Left colon (tissue), 2 donors: ENCODE measurements at regions of chr15 and their contacts with region 1.

Region 1: GRCh38 chr15:52379395-52380106 is 83.9 kb upstream of the MYO5C start:
- DNase-seq: no peak
- ATAC-seq: no peak

Region 2: GRCh38 chr15:52427804-52428203 is 48.3 kb after region 1 on chr15:
- intact Hi-C with region 1: loop called in 1 of 2 experiments (anchors 10 kb)
- DNase-seq: no peak
- ATAC-seq: no peak

Region 3: DNA sequence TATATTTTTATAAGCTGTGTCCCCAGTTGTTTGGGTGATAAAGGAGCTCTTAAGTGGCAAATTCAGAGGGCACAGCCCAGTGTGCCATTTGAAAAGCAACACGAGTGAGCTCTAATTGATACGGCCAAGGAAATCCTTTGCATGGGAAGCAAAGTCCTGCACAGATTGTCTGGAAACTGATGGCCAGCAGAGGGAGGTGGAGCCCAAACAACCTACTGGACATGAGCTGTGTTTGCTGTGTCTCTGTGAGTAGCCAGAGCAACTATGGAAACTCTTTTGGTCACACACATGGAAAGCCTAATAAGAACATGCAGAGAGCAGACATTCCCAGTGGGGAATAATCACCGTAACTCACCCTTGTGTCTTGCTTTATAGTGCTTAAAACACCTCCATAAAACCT is 386.2 kb after region 1 on chr15:
- intact Hi-C with region 1: no loop called
- DNase-seq: no peak
- ATAC-seq: no peak